Adrenal gland (tissue), 19 donors: ENCODE measurements at regions of chr12 and their contacts with region 1.

Region 1: DNA sequence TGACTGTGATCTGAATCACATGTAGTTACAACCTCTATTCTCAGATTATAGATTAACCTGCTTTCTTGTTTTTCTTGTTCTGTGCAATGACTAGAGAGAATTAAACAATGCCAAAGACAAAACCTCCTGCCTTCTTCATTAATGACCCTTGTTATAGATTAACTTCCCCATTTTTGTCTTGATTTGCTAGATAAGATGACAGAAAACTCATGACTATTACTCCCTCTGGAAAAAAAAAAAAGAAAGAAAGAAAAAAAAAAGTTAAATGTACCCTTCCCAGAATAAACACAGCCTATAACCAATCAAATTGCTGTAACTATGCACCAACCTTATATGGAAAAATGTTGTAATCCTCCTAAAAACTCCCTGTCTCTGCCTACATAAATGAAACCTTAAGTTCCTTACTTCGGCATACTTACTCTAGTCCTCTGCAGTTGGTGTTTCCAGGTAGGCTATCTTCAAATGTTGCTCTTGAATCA is 41.1 kb upstream of the PCED1B start:
- DNase-seq: no peak
- H3K4me3 ChIP-seq: no peak overlapping the region
- H3K27ac ChIP-seq: no peak overlapping the region
- H3K4me1 ChIP-seq: peaks cover 0 to 5% of the 10 kb centered on the region in 2 donors
- H3K27me3 ChIP-seq: no peaks in the 10 kb centered on the region
- CTCF ChIP-seq: no peak
- POLR2A ChIP-seq: no peak

Region 2: DNA sequence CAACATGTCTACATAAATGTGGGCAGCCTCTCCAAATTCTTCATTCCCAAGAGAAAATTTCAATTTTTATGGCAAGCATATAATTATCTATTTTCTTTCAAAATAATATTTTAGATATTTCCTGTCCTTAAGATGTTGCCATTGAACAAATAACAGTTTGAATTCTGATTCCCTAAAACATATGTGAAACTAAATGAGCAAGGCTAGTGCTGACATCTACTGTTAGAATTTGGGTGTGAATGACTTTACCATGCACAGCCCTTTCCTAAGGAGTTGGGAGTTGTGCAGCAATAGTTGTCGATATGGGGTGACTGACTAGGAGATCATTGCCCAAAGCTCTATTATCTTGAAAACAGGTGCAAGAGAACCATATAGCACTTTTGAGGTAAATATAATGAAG is 104.4 kb before region 1 on chr12:
- intact Hi-C with region 1: no loop called
- DNase-seq: peak in 1 of 7 donors; percentile 5
- H3K4me3 ChIP-seq: no peak overlapping the region
- H3K27ac ChIP-seq: no peak overlapping the region
- H3K4me1 ChIP-seq: no peaks in the 10 kb centered on the region
- H3K27me3 ChIP-seq: no peaks in the 10 kb centered on the region
- CTCF ChIP-seq: peak; percentile 28 to 66 (median 54)
- POLR2A ChIP-seq: no peak

Region 3: DNA sequence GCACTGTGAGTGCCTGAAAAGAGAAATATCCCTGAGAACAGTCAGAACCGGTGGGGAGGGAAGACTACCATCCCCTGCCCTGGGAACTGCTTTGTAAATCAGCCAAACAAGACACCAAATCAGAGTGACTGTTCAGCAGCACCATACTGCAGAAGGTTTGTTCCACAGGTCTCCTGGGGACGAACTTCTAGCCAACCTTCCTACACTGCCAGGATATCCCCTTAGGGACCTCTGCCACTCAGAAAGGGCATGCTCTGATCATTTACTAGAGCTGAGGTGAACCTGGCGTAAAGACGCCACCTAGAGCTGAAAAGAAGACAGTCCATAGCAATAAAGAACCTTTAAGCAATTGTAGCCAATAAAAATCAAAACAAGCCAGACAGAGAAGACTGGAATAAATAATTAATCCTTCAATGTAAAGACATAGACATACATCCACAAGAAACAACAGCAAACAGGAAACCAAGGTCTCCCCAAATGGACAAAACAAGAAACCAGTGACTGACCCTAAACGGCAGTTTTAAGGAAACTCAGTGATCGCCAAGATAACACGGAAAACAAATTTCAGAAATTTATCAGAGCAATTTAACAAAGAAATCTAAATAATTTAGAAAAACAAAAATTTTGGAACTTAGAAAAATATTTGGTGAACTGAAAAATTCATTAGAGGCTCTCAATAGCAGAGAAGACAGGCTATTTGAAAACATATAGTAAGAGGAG is 269.5 kb after region 1 on chr12:
- intact Hi-C with region 1: loop called (anchors 5 kb)
- DNase-seq: peak; percentile 31 to 74 (median 47)
- H3K4me3 ChIP-seq: no peak overlapping the region
- H3K27ac ChIP-seq: no peak overlapping the region
- H3K4me1 ChIP-seq: no peaks in the 10 kb centered on the region
- H3K27me3 ChIP-seq: no peaks in the 10 kb centered on the region
- CTCF ChIP-seq: peak; percentile 36 to 81 (median 70)
- POLR2A ChIP-seq: no peak

Region 4: GRCh38 chr12:47602325-47602724 is 564.0 kb after region 1 on chr12:
- intact Hi-C with region 1: no loop called
- DNase-seq: no peak
- H3K4me3 ChIP-seq: no peak overlapping the region
- H3K27ac ChIP-seq: no peak overlapping the region
- H3K4me1 ChIP-seq: no peaks in the 10 kb centered on the region
- H3K27me3 ChIP-seq: no peaks in the 10 kb centered on the region
- CTCF ChIP-seq: no peak
- POLR2A ChIP-seq: no peak

Region 5: GRCh38 chr12:47755655-47756562 is 717.6 kb after region 1 on chr12:
- intact Hi-C with region 1: no loop called
- DNase-seq: no peak
- H3K4me3 ChIP-seq: peak overlapping the region in 1 of 4 donors; percentile 9
- H3K27ac ChIP-seq: peak overlapping the region in 1 of 5 donors; percentile 45
- H3K4me1 ChIP-seq: peaks cover 10 to 15% of the 10 kb centered on the region in 2 donors
- H3K27me3 ChIP-seq: no peaks in the 10 kb centered on the region
- CTCF ChIP-seq: no peak
- POLR2A ChIP-seq: no peak